ENCODE measurements at regions of chr7 and their contacts with region 1.

Region 1: DNA sequence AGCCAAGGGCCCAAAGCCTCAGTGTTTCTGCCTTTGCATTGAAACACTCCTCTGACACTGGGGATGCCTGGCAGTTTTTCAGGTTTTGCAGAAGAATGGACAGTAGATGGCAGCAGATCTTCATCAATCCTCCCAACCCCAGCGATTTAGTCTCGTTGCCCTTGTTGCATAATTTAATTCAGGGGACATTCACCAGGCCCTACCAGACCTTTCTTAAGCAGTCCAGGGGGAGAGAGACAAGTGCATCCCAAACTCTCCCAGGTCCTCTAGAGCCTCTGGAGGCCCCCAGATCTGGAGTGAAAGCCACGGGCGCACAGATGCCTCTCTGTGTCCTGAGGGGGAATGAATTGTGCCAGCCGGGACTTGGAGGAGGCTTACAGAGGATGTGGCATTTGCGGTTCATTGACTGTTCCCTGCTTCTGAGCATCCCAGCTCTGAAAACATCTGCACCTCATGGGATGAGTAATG is 29.6 kb downstream of the MINDY4 start:
- DNase-seq: peak; percentile 58
- H3K4me3 ChIP-seq: no peak overlapping the region
- H3K27ac ChIP-seq: peak overlapping the region in 1 of 4 donors; percentile 21
- H3K4me1 ChIP-seq: peaks cover 14 to 35% (median 26%) of the 10 kb centered on the region in 4 donors
- H3K27me3 ChIP-seq: no peaks in the 10 kb centered on the region
- CTCF ChIP-seq: peak; percentile 59 to 76 (median 66)
- EP300 ChIP-seq: no peak
- POLR2A ChIP-seq: no peak

Region 2: GRCh38 chr7:30164567-30164966 is 636.3 kb before region 1 on chr7:
- in situ Hi-C with region 1: no loop called
- intact Hi-C with region 1: no loop called
- DNase-seq: no peak
- H3K4me3 ChIP-seq: no peak overlapping the region
- H3K27ac ChIP-seq: no peak overlapping the region
- H3K4me1 ChIP-seq: peaks cover 0 to 25% (median 12%) of the 10 kb centered on the region in 4 donors
- H3K27me3 ChIP-seq: no peaks in the 10 kb centered on the region
- CTCF ChIP-seq: peak; percentile 42 to 59 (median 52)
- EP300 ChIP-seq: no peak
- POLR2A ChIP-seq: no peak

Region 3: DNA sequence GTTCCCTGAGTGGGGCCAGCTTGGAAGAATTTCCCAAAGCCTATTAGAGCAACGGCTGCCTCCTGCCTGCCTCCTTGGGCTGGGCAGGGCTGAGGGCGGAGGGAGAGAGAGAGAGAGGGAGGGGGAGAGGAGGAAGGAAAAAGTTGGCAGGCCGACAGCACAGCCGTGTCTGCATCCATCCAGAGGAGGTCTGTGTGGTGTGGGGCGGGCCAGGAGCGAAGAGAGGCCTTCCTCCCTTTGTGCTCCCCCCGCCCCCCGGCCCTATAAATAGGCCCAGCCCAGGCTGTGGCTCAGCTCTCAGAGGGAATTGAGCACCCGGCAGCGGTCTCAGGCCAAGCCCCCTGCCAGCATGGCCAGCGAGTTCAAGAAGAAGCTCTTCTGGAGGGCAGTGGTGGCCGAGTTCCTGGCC is 110.7 kb after region 1 on chr7 and contains the start of gene AQP1:
- in situ Hi-C with region 1: no loop called
- intact Hi-C with region 1: loop called (anchors 10 kb)
- DNase-seq: peak; percentile 83
- H3K4me3 ChIP-seq: peak within 1 kb of the TSS in 3 of 4 donors; percentile 15 to 34 (median 27)
- H3K27ac ChIP-seq: peak within 1 kb of the TSS; percentile 59 to 87 (median 77)
- H3K4me1 ChIP-seq: peaks cover 17 to 63% (median 47%) of the 10 kb centered on the region in 4 donors
- H3K27me3 ChIP-seq: no peaks in the 10 kb centered on the region
- CTCF ChIP-seq: no peak
- EP300 ChIP-seq: no peak
- POLR2A ChIP-seq: peak; percentile 80
- total RNA-seq, gene AQP1: 21.3 to 98.3 (median 28.4) TPM

Region 4: GRCh38 chr7:30974605-30975255 is 173.9 kb after region 1 on chr7:
- in situ Hi-C with region 1: loop called (anchors 5 to 10 kb)
- intact Hi-C with region 1: no loop called
- DNase-seq: peak; percentile 77
- H3K4me3 ChIP-seq: no peak overlapping the region
- H3K27ac ChIP-seq: no peak overlapping the region
- H3K4me1 ChIP-seq: peaks cover 0 to 8% (median 4%) of the 10 kb centered on the region in 4 donors
- H3K27me3 ChIP-seq: no peaks in the 10 kb centered on the region
- CTCF ChIP-seq: peak; percentile 65 to 86 (median 73)
- EP300 ChIP-seq: no peak
- POLR2A ChIP-seq: no peak

Region 5: GRCh38 chr7:31122649-31123058 is 321.8 kb after region 1 on chr7:
- in situ Hi-C with region 1: loop called (anchors 5 to 25 kb)
- intact Hi-C with region 1: no loop called
- DNase-seq: peak; percentile 49
- H3K4me3 ChIP-seq: no peak overlapping the region
- H3K27ac ChIP-seq: no peak overlapping the region
- H3K4me1 ChIP-seq: no peaks in the 10 kb centered on the region
- H3K27me3 ChIP-seq: no peaks in the 10 kb centered on the region
- CTCF ChIP-seq: peak; percentile 66 to 81 (median 69)
- EP300 ChIP-seq: no peak
- POLR2A ChIP-seq: no peak

Region 6: GRCh38 chr7:32005577-32005976 is 1204.8 kb after region 1 on chr7:
- in situ Hi-C with region 1: no loop called
- intact Hi-C with region 1: no loop called
- DNase-seq: no peak
- H3K4me3 ChIP-seq: no peak overlapping the region
- H3K27ac ChIP-seq: no peak overlapping the region
- H3K4me1 ChIP-seq: no peaks in the 10 kb centered on the region
- H3K27me3 ChIP-seq: no peaks in the 10 kb centered on the region
- CTCF ChIP-seq: no peak
- EP300 ChIP-seq: no peak
- POLR2A ChIP-seq: no peak